Endothelial cell of umbilical vein (primary cell): ENCODE measurements at regions of chr12 and their contacts with region 1.

Region 1: DNA sequence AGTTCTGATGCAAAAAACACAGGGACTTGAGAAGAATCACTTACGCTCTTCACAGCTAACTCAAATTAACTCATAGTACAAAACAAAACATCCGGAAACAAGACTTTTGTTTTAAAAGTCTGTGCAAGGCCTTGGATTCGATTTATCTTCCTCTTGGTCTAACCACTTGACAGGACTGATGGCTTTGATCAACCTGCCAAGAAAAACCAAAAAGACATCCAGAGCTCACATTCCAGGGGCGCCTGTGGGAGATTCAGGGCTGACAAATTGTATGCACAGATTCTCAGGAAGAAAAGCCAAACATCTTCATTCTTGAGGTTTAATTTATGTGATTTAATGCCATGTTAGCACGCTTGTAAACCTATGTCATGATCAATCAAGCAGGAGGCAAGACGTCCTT is 129.1 kb upstream of the TMCC3 start:
- DNase-seq: peak; percentile 58
- H3K4me3 ChIP-seq: no peak overlapping the region
- H3K27ac ChIP-seq: peak overlapping the region; percentile 19
- H3K4me1 ChIP-seq: peaks cover 26% of the 10 kb centered on the region
- H3K27me3 ChIP-seq: no peaks in the 10 kb centered on the region
- CTCF ChIP-seq: no peak
- POLR2A ChIP-seq: no peak

Region 2: GRCh38 chr12:94805749-94806529 is 26.5 kb after region 1 on chr12:
- CTCF ChIA-PET with region 1: no interaction called
- POLR2A ChIA-PET with region 1: no interaction called
- dilution Hi-C with region 1: no loop called
- intact Hi-C with region 1: loop called (anchors 2 kb)
- DNase-seq: peak; percentile 80
- H3K4me3 ChIP-seq: no peak overlapping the region
- H3K27ac ChIP-seq: peak overlapping the region; percentile 53
- H3K4me1 ChIP-seq: peaks cover 8% of the 10 kb centered on the region
- H3K27me3 ChIP-seq: peaks cover 0 to 2% of the 10 kb centered on the region in 2 experiments
- CTCF ChIP-seq: no peak
- POLR2A ChIP-seq: no peak

Region 3: GRCh38 chr12:94889445-94890210 is 110.1 kb after region 1 on chr12:
- CTCF ChIA-PET with region 1: no interaction called
- POLR2A ChIA-PET with region 1: no interaction called
- dilution Hi-C with region 1: no loop called
- intact Hi-C with region 1: no loop called
- DNase-seq: no peak
- H3K4me3 ChIP-seq: no peak overlapping the region
- H3K27ac ChIP-seq: no peak overlapping the region
- H3K4me1 ChIP-seq: no peaks in the 10 kb centered on the region
- H3K27me3 ChIP-seq: peaks cover 3 to 7% of the 10 kb centered on the region in 2 experiments
- CTCF ChIP-seq: no peak
- POLR2A ChIP-seq: no peak